Left ventricle myocardium inferior (tissue), 1 donor: ENCODE measurements at regions of chr19 and their contacts with region 1.

Region 1: DNA sequence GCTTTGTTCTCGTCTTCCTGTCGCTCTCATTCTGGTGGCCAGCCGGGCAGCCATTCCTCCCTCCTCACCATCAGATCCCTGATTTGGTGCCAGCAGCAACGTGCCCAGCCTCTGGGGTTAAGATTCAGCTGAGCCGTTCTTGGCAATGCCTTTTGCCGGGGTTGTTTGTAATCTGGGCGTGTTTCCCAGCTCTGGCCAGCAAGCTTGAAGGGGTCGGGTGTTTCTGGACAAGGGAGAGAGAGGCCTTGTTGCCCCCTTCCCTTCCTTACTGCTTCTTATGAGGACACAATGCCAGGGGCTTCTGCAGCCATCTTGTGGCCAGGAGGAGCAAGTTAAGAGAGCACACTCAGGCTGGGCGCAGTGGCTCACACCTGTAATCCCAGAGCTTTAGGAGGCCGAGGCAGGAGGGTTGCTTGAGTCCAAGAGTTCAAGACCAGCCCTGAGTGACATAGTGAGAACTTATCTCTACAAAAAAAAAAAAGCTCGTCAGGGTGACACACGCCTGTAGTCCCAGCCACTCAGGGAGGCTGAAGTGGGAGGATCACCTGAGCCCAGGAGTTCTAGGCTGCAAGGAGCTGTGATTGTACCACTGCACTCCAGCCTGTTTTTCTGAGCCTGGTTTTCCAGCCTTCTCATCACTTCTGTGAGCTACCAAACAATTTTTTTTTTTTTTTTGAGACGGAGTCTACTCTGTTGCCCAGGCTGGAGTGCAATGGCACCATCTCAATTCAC is 10.7 kb upstream of the CRTC1 start:
- DNase-seq: no peak
- H3K4me3 ChIP-seq: no peak overlapping the region
- H3K27ac ChIP-seq: peak overlapping the region; percentile 27
- H3K4me1 ChIP-seq: peaks cover 28% of the 10 kb centered on the region
- H3K27me3 ChIP-seq: no peaks in the 10 kb centered on the region
- CTCF ChIP-seq: no peak

Region 2: GRCh38 chr19:18589380-18590272 is 83.1 kb before region 1 on chr19:
- intact Hi-C with region 1: loop called (anchors 5 kb)
- DNase-seq: peak; percentile 66
- H3K4me3 ChIP-seq: peak overlapping the region; percentile 96
- H3K27ac ChIP-seq: peak overlapping the region; percentile 97
- H3K4me1 ChIP-seq: peaks cover 43% of the 10 kb centered on the region
- H3K27me3 ChIP-seq: no peaks in the 10 kb centered on the region
- CTCF ChIP-seq: peak; percentile 28